ENCODE measurements at regions of chr18 and their contacts with region 1.

Region 1: GRCh38 chr18:2932247-2933181 is 80.4 kb downstream of the LPIN2 start:
- H3K4me3 Mint-ChIP-seq: no peak overlapping the region
- H3K27ac Mint-ChIP-seq: no peak overlapping the region
- H3K4me1 Mint-ChIP-seq: peaks cover 6% of the 10 kb centered on the region
- H3K27me3 Mint-ChIP-seq: no peaks in the 10 kb centered on the region

Region 2: GRCh38 chr18:2985628-2986027 is 53.1 kb after region 1 on chr18:
- intact Hi-C with region 1: loop called (anchors 1 kb)
- H3K4me3 Mint-ChIP-seq: no peak overlapping the region
- H3K27ac Mint-ChIP-seq: no peak overlapping the region
- H3K4me1 Mint-ChIP-seq: peaks cover 35% of the 10 kb centered on the region
- H3K27me3 Mint-ChIP-seq: no peaks in the 10 kb centered on the region

Region 3: GRCh38 chr18:3129053-3129864 is 196.7 kb after region 1 on chr18:
- intact Hi-C with region 1: loop called (anchors 5 kb)
- H3K4me3 Mint-ChIP-seq: peak overlapping the region; percentile 64
- H3K27ac Mint-ChIP-seq: peak overlapping the region; percentile 50
- H3K4me1 Mint-ChIP-seq: peaks cover 12% of the 10 kb centered on the region
- H3K27me3 Mint-ChIP-seq: no peaks in the 10 kb centered on the region

Region 4: GRCh38 chr18:3151399-3152264 is 219.1 kb after region 1 on chr18:
- intact Hi-C with region 1: loop called (anchors 5 kb)
- H3K4me3 Mint-ChIP-seq: no peak overlapping the region
- H3K27ac Mint-ChIP-seq: no peak overlapping the region
- H3K4me1 Mint-ChIP-seq: peaks cover 7% of the 10 kb centered on the region
- H3K27me3 Mint-ChIP-seq: no peaks in the 10 kb centered on the region

Measured in dendritic cell treated with granulocyte-macrophage colony-stimulating factor and Interleukin-4, amounts not matched to agents 40 ng/mL and 50 ng/mL, for 4 days (primary cell).